ENCODE measurements at regions of chr7 and their contacts with region 1.

Region 1: DNA sequence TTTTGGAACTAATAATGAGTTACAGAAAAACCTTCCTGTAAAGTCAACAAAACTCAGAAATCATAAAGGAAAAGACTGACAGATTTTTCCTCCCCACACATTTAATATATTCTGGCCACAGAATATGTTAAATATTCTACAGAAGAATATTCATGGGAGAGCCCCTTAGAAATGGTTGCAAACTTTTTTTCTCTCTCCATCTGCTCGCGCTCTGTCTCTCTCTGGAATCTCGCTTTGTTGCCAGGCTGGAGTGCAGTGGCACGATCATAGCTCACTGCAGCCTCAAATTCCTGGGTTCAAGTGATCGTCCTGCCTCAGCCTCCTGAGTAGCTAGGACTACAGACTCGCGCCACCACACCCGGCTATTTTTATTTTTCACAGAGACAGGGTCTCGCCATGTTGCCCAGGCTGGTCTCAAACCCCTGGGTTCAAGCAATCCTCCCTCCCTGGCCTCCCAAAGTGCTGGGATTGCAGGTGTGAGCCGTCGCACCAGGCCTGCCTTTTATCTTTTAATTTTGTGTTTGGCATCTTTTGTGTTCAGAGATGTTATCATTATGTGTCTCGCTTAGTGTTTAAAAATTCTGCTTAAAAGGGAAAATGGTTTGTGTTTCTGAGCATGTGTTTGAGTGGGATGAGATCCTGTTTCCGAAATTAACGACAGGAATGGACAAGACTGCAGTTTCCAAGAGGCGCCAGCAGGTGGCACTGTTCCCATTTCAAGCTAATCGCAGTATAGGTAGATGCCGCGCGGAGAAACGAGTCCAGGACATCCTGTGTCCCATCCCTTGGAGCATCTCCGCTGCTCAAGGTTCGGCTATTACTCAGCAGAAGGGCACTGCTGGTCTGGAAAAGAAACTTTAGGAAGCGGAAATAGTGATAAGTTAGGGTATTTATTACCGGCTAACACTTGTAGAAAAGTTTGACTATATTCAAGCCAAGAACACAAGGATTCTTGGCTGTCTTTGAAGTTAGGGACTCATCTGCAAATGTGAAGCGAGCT is 23.1 kb upstream of the ST7 start:
- DNase-seq: peak; percentile 46 to 85 (median 78)
- ATAC-seq: peak; percentile 93
- H3K4me3 ChIP-seq: no peak overlapping the region
- H3K4me3 Mint-ChIP-seq: no peak overlapping the region
- H3K27ac ChIP-seq: no peak overlapping the region
- H3K27ac Mint-ChIP-seq: no peak overlapping the region
- H3K4me1 ChIP-seq: no peaks in the 10 kb centered on the region
- H3K4me1 Mint-ChIP-seq: peaks cover 3% of the 10 kb centered on the region
- H3K27me3 ChIP-seq: peaks cover 0 to 2% of the 10 kb centered on the region in 2 experiments
- H3K27me3 Mint-ChIP-seq: peaks cover 7% of the 10 kb centered on the region
- CTCF ChIP-seq: peak; percentile 92

Region 2: GRCh38 chr7:116984917-116985316 is 54.7 kb after region 1 on chr7:
- CTCF ChIA-PET with region 1: interaction called, 14 read pairs
- POLR2A ChIA-PET with region 1: no interaction called
- intact Hi-C with region 1: loop called (anchors 1 to 5 kb)
- DNase-seq: peak in 2 of 9 experiments; percentile 46 to 61
- ATAC-seq: peak; percentile 56
- H3K4me3 ChIP-seq: no peak overlapping the region
- H3K4me3 Mint-ChIP-seq: no peak overlapping the region
- H3K27ac ChIP-seq: no peak overlapping the region
- H3K27ac Mint-ChIP-seq: no peak overlapping the region
- H3K4me1 ChIP-seq: no peaks in the 10 kb centered on the region
- H3K4me1 Mint-ChIP-seq: no peaks in the 10 kb centered on the region
- H3K27me3 ChIP-seq: no peaks in the 10 kb centered on the region
- H3K27me3 Mint-ChIP-seq: no peaks in the 10 kb centered on the region
- CTCF ChIP-seq: peak; percentile 77

Region 3: DNA sequence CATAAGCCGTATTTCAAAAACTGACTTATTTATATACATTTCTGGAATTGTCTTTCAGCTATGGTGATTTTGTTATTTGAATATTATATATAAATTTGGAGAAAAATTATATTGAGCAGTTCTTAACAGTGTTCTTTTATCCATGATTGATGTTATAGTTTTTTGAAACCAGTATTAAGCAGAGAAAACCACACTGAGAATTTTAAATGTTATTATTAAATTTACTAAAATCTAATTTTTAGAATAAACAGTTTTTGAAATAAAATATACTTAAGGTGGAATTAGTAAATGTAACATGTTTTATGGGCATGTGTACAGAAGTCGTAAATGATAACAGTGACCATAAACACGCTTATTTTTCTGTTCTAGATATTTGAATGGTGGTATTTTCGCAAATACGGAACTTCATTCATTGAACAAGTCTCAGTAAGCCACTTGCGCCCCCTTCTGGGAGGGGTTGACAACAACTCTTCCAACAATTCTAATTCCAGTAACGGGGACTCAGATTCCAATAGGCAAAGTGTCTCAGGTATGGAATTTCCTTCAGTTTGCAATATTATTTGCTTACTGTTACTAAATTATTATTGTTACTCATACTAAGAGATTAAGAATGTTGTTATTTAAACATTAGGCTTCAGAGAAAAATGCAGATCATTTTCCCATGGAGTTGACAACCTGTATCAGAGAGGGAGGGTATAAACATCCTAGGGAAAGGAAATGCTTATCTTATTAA is 189.1 kb after region 1 on chr7:
- CTCF ChIA-PET with region 1: interaction called, 106 read pairs
- POLR2A ChIA-PET with region 1: no interaction called
- intact Hi-C with region 1: loop called (anchors 1 kb)
- DNase-seq: peak; percentile 48 to 83 (median 76)
- ATAC-seq: peak; percentile 44
- H3K4me3 ChIP-seq: no peak overlapping the region
- H3K4me3 Mint-ChIP-seq: no peak overlapping the region
- H3K27ac ChIP-seq: no peak overlapping the region
- H3K27ac Mint-ChIP-seq: no peak overlapping the region
- H3K4me1 ChIP-seq: no peaks in the 10 kb centered on the region
- H3K4me1 Mint-ChIP-seq: no peaks in the 10 kb centered on the region
- H3K27me3 ChIP-seq: no peaks in the 10 kb centered on the region
- H3K27me3 Mint-ChIP-seq: no peaks in the 10 kb centered on the region
- CTCF ChIP-seq: peak; percentile 95

Region 4: DNA sequence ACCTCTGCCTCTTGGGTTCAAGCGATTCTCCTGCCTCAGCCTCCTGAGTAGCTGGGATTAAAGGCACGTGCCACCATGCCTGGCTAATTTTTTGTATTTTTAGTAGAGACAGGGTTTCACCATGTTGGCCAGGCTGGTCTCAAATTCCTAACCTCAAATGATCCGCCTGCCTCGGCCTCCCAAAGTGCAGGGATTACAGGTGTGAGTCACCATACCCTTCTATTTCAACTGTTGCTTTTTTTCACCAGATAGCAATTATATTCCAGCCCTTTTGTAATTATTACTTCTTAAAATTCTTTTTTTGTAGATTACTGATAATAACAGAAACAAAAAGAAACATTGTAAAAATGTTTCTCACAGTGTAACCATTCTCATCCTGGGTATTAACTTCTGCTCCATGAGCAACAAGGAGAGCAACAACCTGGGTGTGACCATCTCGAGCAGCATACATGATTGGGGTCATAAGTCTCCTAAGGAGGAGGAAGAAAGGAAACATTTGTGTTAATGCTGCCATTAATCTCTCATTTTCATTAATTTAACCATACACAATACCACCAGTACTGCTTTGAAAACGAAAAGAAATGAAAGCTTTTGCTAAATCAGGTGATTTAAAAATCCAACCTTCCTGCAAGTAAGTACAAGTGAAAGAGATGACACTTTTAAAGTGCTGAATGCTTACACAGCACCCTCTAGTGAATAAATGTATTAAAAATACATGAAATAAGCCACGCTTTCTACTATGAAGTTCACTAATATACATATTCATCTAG is 455.3 kb after region 1 on chr7:
- CTCF ChIA-PET with region 1: no interaction called
- POLR2A ChIA-PET with region 1: no interaction called
- intact Hi-C with region 1: no loop called
- DNase-seq: no peak
- ATAC-seq: no peak
- H3K4me3 ChIP-seq: no peak overlapping the region
- H3K4me3 Mint-ChIP-seq: no peak overlapping the region
- H3K27ac ChIP-seq: no peak overlapping the region
- H3K27ac Mint-ChIP-seq: no peak overlapping the region
- H3K4me1 ChIP-seq: no peaks in the 10 kb centered on the region
- H3K4me1 Mint-ChIP-seq: no peaks in the 10 kb centered on the region
- H3K27me3 ChIP-seq: no peaks in the 10 kb centered on the region
- H3K27me3 Mint-ChIP-seq: no peaks in the 10 kb centered on the region
- CTCF ChIP-seq: no peak

Region 5: GRCh38 chr7:118153551-118154177 is 1223.5 kb after region 1 on chr7:
- CTCF ChIA-PET with region 1: no interaction called
- POLR2A ChIA-PET with region 1: no interaction called
- intact Hi-C with region 1: loop called in 1 of 2 experiments (anchors 5 kb)
- DNase-seq: peak in 4 of 9 experiments; percentile 6 to 57 (median 30)
- ATAC-seq: peak; percentile 63
- H3K4me3 ChIP-seq: no peak overlapping the region
- H3K4me3 Mint-ChIP-seq: no peak overlapping the region
- H3K27ac ChIP-seq: no peak overlapping the region
- H3K27ac Mint-ChIP-seq: no peak overlapping the region
- H3K4me1 ChIP-seq: no peaks in the 10 kb centered on the region
- H3K4me1 Mint-ChIP-seq: no peaks in the 10 kb centered on the region
- H3K27me3 ChIP-seq: peaks cover 0 to 3% of the 10 kb centered on the region in 2 experiments
- H3K27me3 Mint-ChIP-seq: peaks cover 34% of the 10 kb centered on the region
- CTCF ChIP-seq: peak; percentile 84

Measured in CD8-positive, alpha-beta T cell (primary cell).